CD8-positive, alpha-beta memory T cell (primary cell): ENCODE measurements at regions of chr22 and their contacts with region 1.

Region 1: GRCh38 chr22:46748908-46749675 is 11.0 kb upstream of the CERK start:
- DNase-seq: peak; percentile 45 to 83 (median 59)
- H3K4me3 ChIP-seq: peak overlapping the region; percentile 52
- H3K4me3 Mint-ChIP-seq: peak overlapping the region; percentile 32 to 86 (median 80)
- H3K27ac ChIP-seq: peak overlapping the region; percentile 36
- H3K27ac Mint-ChIP-seq: peak overlapping the region; percentile 94 to 98 (median 96)
- H3K4me1 ChIP-seq: peaks cover 27% of the 10 kb centered on the region
- H3K4me1 Mint-ChIP-seq: peaks cover 21 to 33% (median 26%) of the 10 kb centered on the region in 3 donors
- H3K27me3 ChIP-seq: no peaks in the 10 kb centered on the region
- H3K27me3 Mint-ChIP-seq: no peaks in the 10 kb centered on the region

Region 2: GRCh38 chr22:46737976-46738646 is 11.0 kb before region 1 on chr22 and contains the start of gene CERK:
- CTCF ChIA-PET with region 1: interaction called, 13 read pairs
- POLR2A ChIA-PET with region 1: interaction called, 16 read pairs
- DNase-seq: peak; percentile 58 to 75 (median 67)
- H3K4me3 ChIP-seq: peak within 1 kb of the TSS; percentile 76
- H3K4me3 Mint-ChIP-seq: peak within 1 kb of the TSS; percentile 95 to 100 (median 99)
- H3K27ac ChIP-seq: peak within 1 kb of the TSS; percentile 76
- H3K27ac Mint-ChIP-seq: peak within 1 kb of the TSS; percentile 97 to 100 (median 100)
- H3K4me1 ChIP-seq: peaks cover 43% of the 10 kb centered on the region
- H3K4me1 Mint-ChIP-seq: peaks cover 36 to 46% (median 37%) of the 10 kb centered on the region in 3 donors
- H3K27me3 ChIP-seq: no peaks in the 10 kb centered on the region
- H3K27me3 Mint-ChIP-seq: peaks cover 0 to 5% of the 10 kb centered on the region in 2 donors
- total RNA-seq, gene CERK: 64.3 to 64.5 TPM